ENCODE measurements at regions of chr12 and their contacts with region 1.

Region 1: GRCh38 chr12:17642340-17642650 is 447.7 kb downstream of the RERGL start:
- DNase-seq: no peak
- H3K4me3 ChIP-seq: no peak overlapping the region
- CTCF ChIP-seq: no peak

Region 2: DNA sequence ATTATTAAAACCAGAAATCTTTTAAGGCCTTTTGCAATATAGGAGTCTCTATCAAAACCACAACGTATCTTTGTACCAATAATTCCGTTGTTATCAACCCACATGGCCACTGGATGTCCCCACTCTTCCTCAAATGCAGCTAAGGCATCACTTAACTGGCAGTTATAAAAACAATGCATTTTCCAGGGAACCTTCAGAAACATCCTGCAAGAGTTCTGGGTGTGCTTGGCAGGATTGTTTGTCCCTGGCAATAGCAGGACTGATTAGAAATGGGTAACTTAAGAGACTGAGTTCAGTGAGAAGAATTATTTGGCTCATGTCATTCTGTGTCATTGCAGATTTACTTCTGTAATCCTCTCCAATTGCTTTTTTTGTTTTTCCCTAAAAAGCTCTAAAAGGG is 1476.8 kb before region 1 on chr12:
- CTCF ChIA-PET with region 1: interaction called, 12 read pairs
- POLR2A ChIA-PET with region 1: no interaction called
- DNase-seq: peak; percentile 3
- H3K4me3 ChIP-seq: no peak overlapping the region
- CTCF ChIP-seq: peak; percentile 32

Region 3: GRCh38 chr12:16385782-16386646 is 1256.3 kb before region 1 on chr12:
- CTCF ChIA-PET with region 1: interaction called, 33 read pairs
- POLR2A ChIA-PET with region 1: no interaction called
- DNase-seq: peak; percentile 16
- H3K4me3 ChIP-seq: no peak overlapping the region
- CTCF ChIP-seq: peak; percentile 28

Region 4: DNA sequence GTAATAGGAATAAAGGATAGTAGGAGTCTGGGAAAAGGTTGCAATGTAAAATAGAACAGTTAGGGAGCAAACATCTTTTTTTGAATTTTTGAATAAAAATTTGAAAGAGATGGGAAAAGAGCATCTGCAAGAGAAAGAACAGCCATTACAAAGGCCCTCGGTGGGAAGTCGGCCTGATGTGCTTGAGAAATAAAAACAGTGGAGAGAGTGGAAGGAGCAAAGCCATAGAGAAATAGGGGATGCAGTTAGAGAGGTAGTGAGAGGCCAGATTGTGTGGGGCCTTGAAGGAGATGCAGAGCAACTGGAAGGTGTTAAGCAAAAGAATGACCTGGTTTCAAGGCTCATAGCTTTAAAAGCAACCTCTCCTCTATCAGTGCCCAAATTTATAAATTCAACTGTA is 37.9 kb after region 1 on chr12:
- CTCF ChIA-PET with region 1: no interaction called
- POLR2A ChIA-PET with region 1: no interaction called
- DNase-seq: no peak
- H3K4me3 ChIP-seq: no peak overlapping the region
- CTCF ChIP-seq: no peak

Region 5: DNA sequence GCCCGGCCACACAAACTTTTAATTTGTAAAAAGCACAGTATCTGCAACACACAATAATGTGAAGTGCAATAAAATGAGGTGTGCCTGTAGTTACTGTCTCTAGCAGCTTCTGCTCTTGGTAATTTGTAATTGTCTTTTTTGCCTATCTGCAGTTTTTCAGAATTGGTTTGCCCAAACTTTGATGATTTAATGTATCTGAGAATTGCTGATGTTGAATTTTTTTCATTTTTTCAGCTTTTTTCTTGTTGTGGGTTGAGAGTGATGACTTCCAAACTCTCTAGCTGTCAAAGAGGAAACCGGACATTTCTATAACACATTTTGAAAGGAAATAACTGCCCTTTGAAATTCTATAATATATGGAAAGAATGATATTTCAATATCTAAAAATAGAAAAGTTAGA is 210.8 kb after region 1 on chr12:
- CTCF ChIA-PET with region 1: no interaction called
- POLR2A ChIA-PET with region 1: no interaction called
- DNase-seq: no peak
- H3K4me3 ChIP-seq: no peak overlapping the region
- CTCF ChIP-seq: no peak

Measured in AG04449 (cell line).